Activated CD8-positive, alpha-beta T cell treated with anti-CD3 and anti-CD28 coated beads for 36 hours (primary cell): ENCODE measurements at regions of chr20 and their contacts with region 1.

Region 1: GRCh38 chr20:1299522-1299921 is 29.4 kb downstream of the SDCBP2 start:
- DNase-seq: peak; percentile 56
- ATAC-seq: peak; percentile 31
- H3K4me3 Mint-ChIP-seq: no peak overlapping the region
- H3K27ac Mint-ChIP-seq: peak overlapping the region; percentile 18
- H3K4me1 Mint-ChIP-seq: peaks cover 25% of the 10 kb centered on the region
- H3K27me3 Mint-ChIP-seq: no peaks in the 10 kb centered on the region
- CTCF ChIP-seq: peak; percentile 51

Region 2: GRCh38 chr20:621125-621756 is 678.3 kb before region 1 on chr20:
- CTCF ChIA-PET with region 1: no interaction called
- POLR2A ChIA-PET with region 1: no interaction called
- intact Hi-C with region 1: no loop called
- DNase-seq: no peak
- ATAC-seq: no peak
- H3K4me3 Mint-ChIP-seq: no peak overlapping the region
- H3K27ac Mint-ChIP-seq: no peak overlapping the region
- H3K4me1 Mint-ChIP-seq: no peaks in the 10 kb centered on the region
- H3K27me3 Mint-ChIP-seq: peaks cover 24% of the 10 kb centered on the region
- CTCF ChIP-seq: no peak

Region 3: DNA sequence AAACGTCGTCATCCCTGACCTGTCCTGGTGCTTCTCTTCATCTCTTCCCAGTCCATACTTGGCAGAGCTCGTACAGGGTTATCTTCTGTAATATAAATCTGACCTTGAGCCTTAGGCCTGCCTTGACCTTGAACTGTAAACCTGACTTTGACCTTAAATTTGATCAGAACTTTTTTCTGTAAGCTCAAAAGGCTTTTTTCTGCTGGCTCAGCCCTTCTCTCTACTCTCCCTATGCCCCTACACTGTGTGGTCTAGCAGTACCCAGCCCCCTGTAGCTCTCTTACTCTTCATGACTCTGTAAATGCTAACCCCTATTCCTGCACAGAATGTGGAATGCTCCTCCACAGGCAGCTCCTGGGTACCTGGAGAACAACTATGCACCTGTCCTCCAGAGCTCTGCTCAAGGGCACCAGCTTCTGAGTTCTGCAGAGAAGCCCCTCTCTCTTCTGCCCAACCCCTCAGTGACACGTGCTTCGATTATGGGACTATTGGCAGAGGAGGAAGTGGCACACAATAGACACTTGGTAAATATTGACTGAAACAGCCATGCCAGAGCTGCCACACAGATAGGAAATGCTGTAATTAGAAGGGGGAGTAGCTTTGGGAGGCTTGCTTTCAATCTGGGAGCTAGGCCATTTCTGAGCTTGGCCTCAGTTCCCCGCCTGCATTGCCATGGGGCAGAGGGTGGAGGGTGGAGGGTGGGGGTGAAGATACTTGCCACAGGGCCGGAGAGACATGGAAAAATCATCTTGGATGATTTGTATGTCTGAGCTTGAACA is 18.1 kb before region 1 on chr20:
- CTCF ChIA-PET with region 1: interaction called, 12 read pairs
- POLR2A ChIA-PET with region 1: interaction called, 6 read pairs
- intact Hi-C with region 1: no loop called
- DNase-seq: no peak
- ATAC-seq: no peak
- H3K4me3 Mint-ChIP-seq: no peak overlapping the region
- H3K27ac Mint-ChIP-seq: peak overlapping the region; percentile 52
- H3K4me1 Mint-ChIP-seq: peaks cover 49% of the 10 kb centered on the region
- H3K27me3 Mint-ChIP-seq: no peaks in the 10 kb centered on the region
- CTCF ChIP-seq: no peak

Region 4: GRCh38 chr20:1313236-1313964 is 13.9 kb after region 1 on chr20:
- CTCF ChIA-PET with region 1: interaction called, 11 read pairs
- POLR2A ChIA-PET with region 1: interaction called, 4 read pairs
- intact Hi-C with region 1: no loop called
- DNase-seq: peak; percentile 65
- ATAC-seq: peak; percentile 81
- H3K4me3 Mint-ChIP-seq: no peak overlapping the region
- H3K27ac Mint-ChIP-seq: no peak overlapping the region
- H3K4me1 Mint-ChIP-seq: peaks cover 13% of the 10 kb centered on the region
- H3K27me3 Mint-ChIP-seq: peaks cover 2% of the 10 kb centered on the region
- CTCF ChIP-seq: peak; percentile 100

Region 5: GRCh38 chr20:1397710-1398109 is 98.2 kb after region 1 on chr20:
- CTCF ChIA-PET with region 1: no interaction called
- POLR2A ChIA-PET with region 1: no interaction called
- intact Hi-C with region 1: no loop called
- DNase-seq: no peak
- ATAC-seq: no peak
- H3K4me3 Mint-ChIP-seq: no peak overlapping the region
- H3K27ac Mint-ChIP-seq: no peak overlapping the region
- H3K4me1 Mint-ChIP-seq: peaks cover 18% of the 10 kb centered on the region
- H3K27me3 Mint-ChIP-seq: no peaks in the 10 kb centered on the region
- CTCF ChIP-seq: peak; percentile 39

Region 6: GRCh38 chr20:1437235-1437904 is 137.8 kb after region 1 on chr20:
- CTCF ChIA-PET with region 1: interaction called, 10 read pairs
- POLR2A ChIA-PET with region 1: no interaction called
- intact Hi-C with region 1: no loop called
- DNase-seq: peak; percentile 84
- ATAC-seq: peak; percentile 29
- H3K4me3 Mint-ChIP-seq: no peak overlapping the region
- H3K27ac Mint-ChIP-seq: no peak overlapping the region
- H3K4me1 Mint-ChIP-seq: peaks cover 35% of the 10 kb centered on the region
- H3K27me3 Mint-ChIP-seq: no peaks in the 10 kb centered on the region
- CTCF ChIP-seq: peak; percentile 89

Region 7: DNA sequence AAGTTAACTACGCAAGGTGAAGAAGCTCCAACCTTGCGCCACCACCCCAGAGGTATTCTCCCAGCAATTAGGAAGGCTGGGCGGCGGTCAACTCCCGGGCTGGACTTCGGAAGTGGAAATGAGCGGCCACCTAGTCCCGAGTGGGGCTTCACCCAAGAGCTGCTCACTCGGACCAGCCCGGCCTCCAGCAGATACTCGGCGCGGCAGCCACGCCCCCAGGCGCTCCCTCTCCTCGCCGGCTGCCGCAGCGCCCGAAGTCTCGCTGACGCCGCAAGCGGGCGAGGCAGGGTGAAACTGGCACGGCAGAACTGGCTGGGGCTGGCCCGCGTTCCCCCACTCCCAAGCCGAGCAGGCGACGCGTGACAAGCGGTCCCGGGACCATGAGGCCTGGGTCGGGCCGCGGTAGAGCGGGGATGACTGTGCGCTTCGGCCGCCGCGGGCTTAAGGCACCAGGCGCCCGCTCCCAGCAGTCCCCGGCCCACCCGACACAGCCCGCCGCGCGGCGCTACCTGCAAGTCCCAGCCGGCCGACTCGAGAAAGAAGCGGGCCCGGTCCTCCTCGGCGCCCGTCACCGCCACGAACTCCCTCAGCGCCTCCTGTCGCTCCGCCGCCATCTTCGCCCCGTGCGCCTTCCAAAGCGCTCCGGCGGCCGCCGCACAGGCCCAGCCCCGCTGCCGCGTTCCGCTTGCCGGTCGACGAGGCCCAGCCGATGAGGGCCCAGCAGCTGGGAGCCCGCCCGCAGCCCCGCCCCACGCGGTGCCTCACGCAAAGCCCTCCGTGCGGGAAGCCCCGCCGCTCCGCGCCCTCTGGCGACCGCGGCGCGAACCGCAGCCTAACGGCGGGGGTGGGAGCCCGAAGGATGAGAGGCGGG is 166.9 kb after region 1 on chr20 and contains the start of gene NSFL1C:
- CTCF ChIA-PET with region 1: interaction called, 13 read pairs
- POLR2A ChIA-PET with region 1: no interaction called
- intact Hi-C with region 1: no loop called
- DNase-seq: peak; percentile 96
- ATAC-seq: peak; percentile 97
- H3K4me3 Mint-ChIP-seq: peak within 1 kb of the TSS; percentile 83
- H3K27ac Mint-ChIP-seq: peak within 1 kb of the TSS; percentile 79
- H3K4me1 Mint-ChIP-seq: peaks cover 46% of the 10 kb centered on the region
- H3K27me3 Mint-ChIP-seq: peaks cover 4% of the 10 kb centered on the region
- CTCF ChIP-seq: peak; percentile 100
- total RNA-seq, gene NSFL1C: 67.2 to 67.9 TPM